ENCODE measurements at regions of chr12 and their contacts with region 1.

Region 1: GRCh38 chr12:55847603-55848291 is 5.0 kb upstream of the MMP19 start:
- DNase-seq: peak; percentile 77
- H3K4me3 ChIP-seq: no peak overlapping the region
- H3K27ac ChIP-seq: peak overlapping the region; percentile 46
- H3K4me1 ChIP-seq: peaks cover 21% of the 10 kb centered on the region
- H3K27me3 ChIP-seq: no peaks in the 10 kb centered on the region
- CTCF ChIP-seq: no peak

Region 2: GRCh38 chr12:55817346-55818139 is 30.2 kb before region 1 on chr12 and contains the starts of genes ORMDL2 and SARNP:
- CTCF ChIA-PET with region 1: interaction called, 10 read pairs
- POLR2A ChIA-PET with region 1: no interaction called
- intact Hi-C with region 1: no loop called
- DNase-seq: peak; percentile 100
- H3K4me3 ChIP-seq: peak within 1 kb of the TSS; percentile 71
- H3K27ac ChIP-seq: peak within 1 kb of the TSS; percentile 75
- H3K4me1 ChIP-seq: peaks cover 17% of the 10 kb centered on the region
- H3K27me3 ChIP-seq: no peaks in the 10 kb centered on the region
- CTCF ChIP-seq: no peak
- total RNA-seq, gene ORMDL2: 32.3 and 35.4 TPM in 2 replicates
- total RNA-seq, gene SARNP: 104 and 115 TPM in 2 replicates